HEK293 (cell line): ENCODE measurements at regions of chr15 and their contacts with region 1.

Region 1: DNA sequence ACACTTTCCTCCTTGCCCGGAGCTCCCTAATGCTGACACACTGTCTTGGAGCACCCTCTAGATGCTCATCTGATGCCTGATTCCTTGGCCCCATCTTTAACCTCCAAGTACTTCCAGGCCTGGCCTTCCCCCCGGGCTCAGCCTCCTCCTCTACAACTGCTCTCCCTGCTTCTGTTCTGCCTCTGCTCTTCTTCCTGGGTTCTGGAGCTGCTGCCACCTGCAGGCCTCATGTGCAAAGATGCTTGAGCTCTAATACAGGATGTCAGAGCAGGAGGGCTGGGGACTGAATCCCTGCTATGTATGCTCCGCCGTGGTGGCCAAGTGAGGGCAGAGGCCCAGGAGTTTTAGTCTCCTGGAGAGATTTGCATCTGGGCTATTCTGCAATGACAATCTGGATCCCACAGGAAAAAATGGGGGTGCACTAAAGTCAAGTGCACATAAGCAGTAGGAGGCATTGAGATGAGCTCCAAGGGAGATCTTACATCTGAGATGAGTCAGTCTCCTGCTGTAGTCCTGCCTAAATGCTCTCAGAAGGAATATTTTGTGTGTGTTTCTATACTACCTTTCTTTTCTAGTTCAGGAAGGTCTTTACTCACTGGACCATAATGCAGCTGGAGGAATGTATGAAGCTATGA is 296.3 kb downstream of the UACA start:
- H3K4me3 ChIP-seq: no peak overlapping the region
- H3K27ac ChIP-seq: no peak overlapping the region
- H3K4me1 ChIP-seq: no peaks in the 10 kb centered on the region
- CTCF ChIP-seq: peak; percentile 90

Region 2: DNA sequence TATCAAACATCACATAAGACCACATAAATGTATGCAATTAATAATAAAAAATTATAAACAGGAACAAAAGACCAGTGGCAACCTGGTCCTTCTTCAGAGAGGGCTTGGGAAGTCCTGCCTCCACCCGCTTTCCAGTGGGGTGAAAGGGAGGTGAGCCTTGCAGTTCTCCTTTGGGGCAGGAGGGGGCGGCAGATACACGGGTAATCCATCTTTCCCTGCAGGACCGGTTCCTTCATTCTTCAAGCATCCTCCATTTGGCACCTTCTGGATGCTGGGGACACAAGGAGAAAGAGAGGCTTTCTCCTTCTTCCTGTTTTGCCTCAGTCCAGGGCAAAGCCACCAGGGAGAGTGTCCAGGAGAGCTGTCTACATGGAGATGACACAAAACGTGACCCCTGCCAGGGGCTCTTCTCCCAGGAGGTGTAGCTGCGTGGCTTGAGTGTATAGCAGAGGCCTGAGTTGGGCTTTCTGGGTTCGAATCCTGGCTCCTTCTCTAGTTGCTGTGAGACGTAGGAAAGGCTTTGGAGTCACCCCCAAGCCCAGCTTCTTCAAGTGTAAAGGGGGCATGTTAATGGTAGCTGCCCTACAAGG is 991.1 kb before region 1 on chr15:
- CTCF ChIA-PET with region 1: interaction called, 25 read pairs
- POLR2A ChIA-PET with region 1: no interaction called
- H3K4me3 ChIP-seq: no peak overlapping the region
- H3K27ac ChIP-seq: no peak overlapping the region
- H3K4me1 ChIP-seq: no peaks in the 10 kb centered on the region
- CTCF ChIP-seq: peak; percentile 80

Region 3: GRCh38 chr15:70451821-70452653 is 15.0 kb before region 1 on chr15:
- CTCF ChIA-PET with region 1: interaction called, 37 read pairs
- POLR2A ChIA-PET with region 1: interaction called, 3 read pairs
- H3K4me3 ChIP-seq: no peak overlapping the region
- H3K27ac ChIP-seq: no peak overlapping the region
- H3K4me1 ChIP-seq: peaks cover 6% of the 10 kb centered on the region; the same call in 1 of the 2 replicates
- CTCF ChIP-seq: no peak

Region 4: GRCh38 chr15:70494852-70495571 is 28.0 kb after region 1 on chr15:
- CTCF ChIA-PET with region 1: interaction called, 53 read pairs
- POLR2A ChIA-PET with region 1: interaction called, 3 read pairs
- H3K4me3 ChIP-seq: no peak overlapping the region
- H3K27ac ChIP-seq: peak overlapping the region; percentile 94
- H3K4me1 ChIP-seq: peaks cover 40% of the 10 kb centered on the region
- CTCF ChIP-seq: no peak

Region 5: DNA sequence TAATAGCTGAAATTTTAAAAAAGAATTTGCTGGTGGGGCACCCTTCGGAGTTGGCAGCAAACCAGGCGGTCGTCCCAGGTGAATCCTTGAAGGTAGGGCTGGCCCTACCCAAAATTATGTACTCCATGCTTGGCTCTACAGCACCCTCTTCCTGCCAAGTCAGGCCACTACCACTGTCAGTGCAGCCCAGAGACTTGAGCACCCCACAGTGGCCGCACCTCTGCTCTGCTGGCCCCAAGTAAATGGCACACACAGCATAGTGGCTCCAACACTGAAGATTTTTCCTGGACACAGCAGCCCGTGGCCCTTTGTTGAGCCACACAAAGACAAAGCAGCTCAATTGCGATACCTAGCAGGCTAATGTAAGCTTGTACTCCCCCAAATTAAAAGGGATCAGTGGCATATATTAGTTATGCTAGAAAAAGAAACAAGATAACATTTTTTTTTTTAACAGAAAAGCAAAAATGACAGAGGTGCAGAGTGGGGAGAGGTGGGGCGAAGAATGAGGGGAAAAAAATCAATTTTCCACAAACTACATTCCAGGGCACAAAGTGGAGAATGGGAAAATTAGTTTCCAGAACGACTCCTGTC is 45.9 kb after region 1 on chr15:
- CTCF ChIA-PET with region 1: interaction called, 33 read pairs
- POLR2A ChIA-PET with region 1: interaction called, 3 read pairs
- H3K4me3 ChIP-seq: no peak overlapping the region
- H3K27ac ChIP-seq: no peak overlapping the region
- H3K4me1 ChIP-seq: peaks cover 9% of the 10 kb centered on the region; the same call in 1 of the 2 replicates
- CTCF ChIP-seq: peak; percentile 73

Region 6: DNA sequence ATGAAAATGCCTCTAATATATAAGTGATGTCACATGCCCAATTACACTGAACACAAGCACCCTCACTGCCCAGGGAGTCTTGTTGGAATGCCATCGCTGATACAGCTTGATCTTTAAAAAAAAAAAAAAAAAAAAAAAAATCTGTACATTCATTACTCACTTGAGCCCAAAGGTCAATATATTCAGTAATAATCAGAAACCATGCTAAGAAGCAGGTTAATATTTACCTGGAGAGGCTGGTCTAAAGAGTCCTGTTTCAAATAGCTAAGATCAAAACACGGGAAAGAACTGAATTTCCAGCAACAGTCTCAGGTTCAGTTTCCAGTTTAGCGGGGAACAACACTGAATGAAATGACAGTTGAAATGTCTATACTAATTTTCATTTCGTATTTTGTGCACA is 186.4 kb after region 1 on chr15:
- CTCF ChIA-PET with region 1: no interaction called
- POLR2A ChIA-PET with region 1: no interaction called
- H3K4me3 ChIP-seq: no peak overlapping the region
- H3K27ac ChIP-seq: no peak overlapping the region
- H3K4me1 ChIP-seq: no peaks in the 10 kb centered on the region
- CTCF ChIP-seq: no peak